ENCODE measurements at regions of chr6 and their contacts with region 1.

Region 1: GRCh38 chr6:36027501-36028087 is at the start of gene MAPK14:
- DNase-seq: peak; percentile 99
- H3K4me3 Mint-ChIP-seq: peak within 1 kb of the TSS; percentile 95
- H3K27ac Mint-ChIP-seq: peak within 1 kb of the TSS; percentile 89
- H3K4me1 Mint-ChIP-seq: peaks cover 32% of the 10 kb centered on the region
- H3K27me3 Mint-ChIP-seq: peaks cover 21% of the 10 kb centered on the region
- total RNA-seq, gene MAPK14: 44.3 and 46.5 TPM in 2 replicates

Region 2: GRCh38 chr6:35920793-35921732 is 106.5 kb before region 1 on chr6 and contains the start of gene SRPK1:
- intact Hi-C with region 1: loop called (anchors 1 kb)
- DNase-seq: peak; percentile 87
- H3K4me3 Mint-ChIP-seq: peak within 1 kb of the TSS; percentile 94
- H3K27ac Mint-ChIP-seq: peak within 1 kb of the TSS; percentile 96
- H3K4me1 Mint-ChIP-seq: peaks cover 35% of the 10 kb centered on the region
- H3K27me3 Mint-ChIP-seq: no peaks in the 10 kb centered on the region
- total RNA-seq, gene SRPK1: 146 and 149 TPM in 2 replicates

Region 3: DNA sequence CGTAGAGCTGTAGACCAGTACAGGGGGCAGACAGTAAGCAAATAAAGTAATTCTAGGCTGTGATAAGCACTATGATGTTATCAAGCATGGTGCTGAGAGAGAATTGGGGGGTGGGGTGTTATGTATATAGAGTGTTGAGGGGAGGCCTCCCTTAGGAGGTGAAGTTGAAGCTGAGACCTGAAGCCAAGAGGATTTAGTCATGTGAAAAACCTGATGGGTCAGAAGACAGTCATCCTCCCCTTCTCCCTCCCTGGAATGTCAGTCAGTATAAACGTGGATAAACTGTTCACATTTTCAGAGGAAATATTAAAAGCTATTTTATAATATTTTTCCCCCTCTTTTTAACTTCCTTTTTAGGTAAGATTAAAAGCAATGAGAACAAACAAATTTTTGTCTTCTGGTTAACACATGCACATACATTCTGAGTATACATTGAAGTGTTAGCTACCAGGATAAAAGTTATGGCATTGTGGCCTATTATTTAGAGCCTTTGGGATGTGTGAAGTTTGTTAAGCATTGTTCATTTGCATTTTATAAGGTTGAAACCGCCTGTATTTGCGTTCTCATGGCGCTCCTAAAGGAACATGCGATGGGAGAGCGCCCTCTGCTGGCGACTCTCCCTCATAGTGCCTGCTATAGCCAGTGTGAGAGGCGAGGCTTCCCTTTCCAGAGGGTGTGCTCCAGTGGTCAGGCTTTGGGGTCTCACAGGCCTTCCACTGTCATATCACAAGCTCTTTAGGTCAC is 67.3 kb after region 1 on chr6:
- intact Hi-C with region 1: loop called (anchors 1 kb)
- DNase-seq: peak; percentile 66
- H3K4me3 Mint-ChIP-seq: no peak overlapping the region
- H3K27ac Mint-ChIP-seq: no peak overlapping the region
- H3K4me1 Mint-ChIP-seq: peaks cover 27% of the 10 kb centered on the region
- H3K27me3 Mint-ChIP-seq: no peaks in the 10 kb centered on the region

Region 4: DNA sequence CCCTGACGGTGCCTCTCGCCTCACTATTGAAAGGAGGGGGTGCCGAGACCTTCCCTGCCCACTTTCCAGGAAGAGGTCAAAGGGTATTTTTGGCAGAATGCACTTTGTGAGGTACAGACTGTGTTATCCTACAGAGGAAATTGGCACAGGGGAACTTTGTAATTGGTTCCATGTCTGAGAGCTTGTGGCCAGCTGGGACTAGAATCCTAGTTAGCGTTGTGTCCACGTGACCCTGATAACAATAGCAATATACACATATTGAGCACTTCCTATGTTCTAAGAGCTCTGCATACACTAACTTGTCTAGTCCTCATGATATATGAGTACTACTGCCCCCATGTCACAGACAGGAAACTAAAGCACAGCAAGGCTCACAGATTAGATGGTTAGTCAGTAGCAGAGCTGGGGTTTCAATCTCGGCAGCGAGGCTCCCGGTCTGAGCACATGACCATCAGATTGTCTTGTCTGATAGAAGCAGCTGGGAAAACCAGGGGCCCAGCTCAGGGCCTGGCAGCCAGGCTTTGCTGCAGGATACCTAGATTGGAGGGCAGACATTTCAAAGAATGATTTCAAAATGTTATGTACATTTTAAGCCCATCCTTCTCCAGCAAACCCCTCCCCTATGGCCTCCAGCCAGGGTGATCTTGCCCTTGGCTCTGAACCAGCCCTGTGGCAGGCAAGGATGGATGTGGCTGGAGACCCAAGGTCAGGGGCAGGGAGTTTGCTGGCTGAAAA is 104.1 kb after region 1 on chr6:
- intact Hi-C with region 1: loop called (anchors 1 kb)
- DNase-seq: peak; percentile 45
- H3K4me3 Mint-ChIP-seq: peak overlapping the region; percentile 75
- H3K27ac Mint-ChIP-seq: peak overlapping the region; percentile 92
- H3K4me1 Mint-ChIP-seq: peaks cover 29% of the 10 kb centered on the region
- H3K27me3 Mint-ChIP-seq: no peaks in the 10 kb centered on the region

Region 5: DNA sequence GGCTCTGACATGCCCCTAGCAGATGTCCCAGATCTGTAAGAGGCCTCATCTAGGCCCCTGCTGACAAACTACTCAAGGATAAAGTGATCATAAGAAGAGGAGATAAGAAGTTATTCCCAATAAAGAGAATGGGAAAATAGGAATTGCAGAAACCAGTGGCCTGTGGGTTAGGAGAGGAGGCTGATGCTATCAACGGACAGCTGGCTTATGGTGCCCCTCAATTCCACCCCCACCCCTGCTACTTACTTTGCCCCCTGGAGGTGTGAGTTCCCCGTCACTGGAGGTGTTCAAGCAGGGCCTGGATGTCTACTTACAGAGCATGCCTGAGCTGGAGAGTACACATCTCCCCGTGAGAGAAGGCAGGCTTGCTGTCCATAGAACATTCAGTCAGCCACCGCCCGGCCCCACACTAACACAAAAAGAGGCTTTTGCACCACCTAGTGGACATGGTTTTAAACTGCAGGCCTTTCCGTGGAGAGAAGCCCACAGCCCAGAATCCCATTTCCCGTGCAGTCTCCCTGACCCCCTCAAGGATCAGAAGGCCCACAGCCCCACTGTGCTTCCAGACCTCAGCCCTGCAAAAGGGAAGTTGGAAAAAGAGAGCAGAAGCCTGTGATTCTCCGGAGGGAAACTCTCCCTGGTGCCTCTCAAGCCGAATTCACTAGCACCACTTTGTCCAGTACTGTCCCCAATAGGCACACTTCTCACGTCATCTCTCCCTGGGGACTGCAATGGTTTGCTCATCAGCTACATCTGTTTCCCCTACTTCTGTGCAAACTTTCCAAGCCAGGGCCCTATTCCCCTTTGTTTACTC is 332.9 kb after region 1 on chr6:
- intact Hi-C with region 1: loop called (anchors 2 kb)
- DNase-seq: peak; percentile 59
- H3K4me3 Mint-ChIP-seq: no peak overlapping the region
- H3K27ac Mint-ChIP-seq: no peak overlapping the region
- H3K4me1 Mint-ChIP-seq: peaks cover 38% of the 10 kb centered on the region
- H3K27me3 Mint-ChIP-seq: peaks cover 25% of the 10 kb centered on the region

Region 6: GRCh38 chr6:36442671-36443470 is 415.3 kb after region 1 on chr6 and contains the starts of genes KCTD20 and PXT1:
- intact Hi-C with region 1: loop called (anchors 2 kb)
- DNase-seq: peak; percentile 84
- H3K4me3 Mint-ChIP-seq: peak within 1 kb of the TSS; percentile 93
- H3K27ac Mint-ChIP-seq: peak within 1 kb of the TSS; percentile 97
- H3K4me1 Mint-ChIP-seq: peaks cover 30% of the 10 kb centered on the region
- H3K27me3 Mint-ChIP-seq: no peaks in the 10 kb centered on the region
- total RNA-seq, gene KCTD20: 51.1 and 54.8 TPM in 2 replicates
- total RNA-seq, gene PXT1: 0.14 and 0.27 TPM in 2 replicates